ENCODE measurements at regions of chr6 and their contacts with region 1.

Region 1: DNA sequence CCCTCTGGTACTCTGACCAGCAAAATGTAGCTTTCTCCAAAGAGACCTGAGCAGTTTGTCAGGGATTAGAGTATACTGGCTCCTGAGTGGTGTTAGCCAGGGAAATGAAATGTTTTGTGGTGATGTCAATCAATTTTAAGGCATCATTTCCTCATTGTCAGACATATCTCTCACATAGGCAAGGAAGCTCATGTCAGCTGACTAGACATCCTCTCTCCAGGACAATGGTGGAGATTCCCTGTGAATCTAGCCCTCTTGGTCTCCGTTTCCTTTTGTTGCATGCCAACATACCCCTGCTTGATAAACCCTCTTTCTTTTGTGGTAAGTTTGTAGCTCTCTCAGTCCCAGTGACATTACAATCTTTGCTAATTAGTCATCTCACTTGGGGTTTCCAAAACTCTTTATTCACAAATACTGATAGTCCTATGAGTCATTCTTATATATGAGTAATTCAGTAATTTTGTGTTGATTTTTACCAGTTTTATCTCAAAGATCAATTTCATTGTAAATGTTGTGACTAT is 135.6 kb upstream of the PTPRK start:
- DNase-seq: no peak
- ATAC-seq: no peak
- H3K4me3 ChIP-seq: no peak overlapping the region
- H3K27ac ChIP-seq: no peak overlapping the region
- H3K4me1 ChIP-seq: no peaks in the 10 kb centered on the region
- H3K27me3 ChIP-seq: no peaks in the 10 kb centered on the region
- CTCF ChIP-seq: no peak

Region 2: GRCh38 chr6:128046033-128046432 is 610.0 kb before region 1 on chr6:
- intact Hi-C with region 1: no loop called
- DNase-seq: no peak
- ATAC-seq: no peak
- H3K4me3 ChIP-seq: no peak overlapping the region
- H3K27ac ChIP-seq: no peak overlapping the region
- H3K4me1 ChIP-seq: no peaks in the 10 kb centered on the region
- H3K27me3 ChIP-seq: no peaks in the 10 kb centered on the region
- CTCF ChIP-seq: no peak

Region 3: GRCh38 chr6:128540702-128541101 is 115.3 kb before region 1 on chr6:
- intact Hi-C with region 1: no loop called
- DNase-seq: no peak
- ATAC-seq: no peak
- H3K4me3 ChIP-seq: no peak overlapping the region
- H3K27ac ChIP-seq: no peak overlapping the region
- H3K4me1 ChIP-seq: no peaks in the 10 kb centered on the region
- H3K27me3 ChIP-seq: no peaks in the 10 kb centered on the region
- CTCF ChIP-seq: no peak

Region 4: GRCh38 chr6:128617285-128617684 is 38.8 kb before region 1 on chr6:
- intact Hi-C with region 1: loop called in 1 of 2 experiments (anchors 2 kb)
- DNase-seq: no peak
- ATAC-seq: no peak
- H3K4me3 ChIP-seq: no peak overlapping the region
- H3K27ac ChIP-seq: no peak overlapping the region
- H3K4me1 ChIP-seq: no peaks in the 10 kb centered on the region
- H3K27me3 ChIP-seq: no peaks in the 10 kb centered on the region
- CTCF ChIP-seq: no peak

Region 5: DNA sequence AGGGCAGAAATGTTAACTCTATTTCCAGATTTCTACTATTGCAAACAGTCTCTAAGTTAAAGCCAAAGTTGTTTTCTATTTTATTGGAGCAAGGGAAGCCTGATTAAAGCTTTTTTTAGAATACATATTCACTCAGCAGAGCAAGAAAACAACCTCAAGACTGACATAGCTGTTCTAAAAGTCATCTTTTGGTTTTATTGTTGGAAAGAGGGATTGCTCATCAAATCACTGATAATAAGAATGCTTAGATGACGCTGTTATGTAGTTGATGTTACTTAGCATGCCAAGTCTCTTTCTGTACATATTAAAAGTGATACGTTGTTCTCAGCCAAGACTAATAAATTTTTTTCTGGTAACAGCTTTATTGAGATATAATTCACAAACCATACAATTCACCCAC is 54.3 kb after region 1 on chr6:
- intact Hi-C with region 1: no loop called
- DNase-seq: no peak
- ATAC-seq: no peak
- H3K4me3 ChIP-seq: no peak overlapping the region
- H3K27ac ChIP-seq: no peak overlapping the region
- H3K4me1 ChIP-seq: no peaks in the 10 kb centered on the region
- H3K27me3 ChIP-seq: no peaks in the 10 kb centered on the region
- CTCF ChIP-seq: no peak